Posterior cingulate gyrus (tissue), 11 donors: ENCODE measurements at regions of chr10 and their contacts with region 1.

Region 1: DNA sequence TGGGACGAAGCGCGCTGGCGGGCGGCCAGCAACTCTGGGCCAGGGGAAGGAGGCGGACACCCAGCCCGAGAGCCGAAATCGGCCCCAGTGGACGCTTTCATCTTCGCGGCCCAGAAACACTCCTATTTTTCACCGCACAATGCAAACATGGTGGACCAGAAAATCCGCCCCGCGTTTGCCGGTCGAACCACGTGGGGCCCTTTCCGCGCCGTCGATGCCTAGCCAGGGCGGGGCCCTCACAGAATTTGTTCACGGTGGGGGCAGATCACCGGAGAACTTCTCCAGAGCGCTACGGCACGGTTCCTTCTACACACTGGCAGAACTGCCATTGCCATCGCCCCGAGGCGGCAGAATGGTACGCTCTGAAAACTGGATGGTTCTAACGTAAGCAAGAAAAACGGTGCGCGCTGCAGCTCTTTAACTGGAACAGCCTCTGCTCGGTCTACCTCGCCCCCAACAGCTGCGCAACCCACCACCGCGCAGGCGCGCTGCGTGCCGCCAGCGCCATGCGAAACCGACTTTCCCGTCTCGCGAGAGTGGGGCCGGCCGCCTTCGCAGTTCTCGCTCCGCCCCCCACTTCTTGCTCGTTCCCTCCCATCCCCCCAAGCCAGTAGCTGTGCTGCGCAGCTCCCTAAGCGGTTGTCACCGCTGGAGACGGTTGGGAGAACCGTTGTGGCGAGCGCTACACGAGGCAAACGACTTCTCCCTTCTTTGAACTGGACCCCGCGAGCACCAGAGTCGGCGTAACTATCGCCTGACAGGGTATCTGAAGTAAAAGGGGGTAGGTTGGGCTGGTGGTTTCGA is at the start of gene HNRNPH3:
- DNase-seq: peak; percentile 95 to 99 (median 97)

Region 2: DNA sequence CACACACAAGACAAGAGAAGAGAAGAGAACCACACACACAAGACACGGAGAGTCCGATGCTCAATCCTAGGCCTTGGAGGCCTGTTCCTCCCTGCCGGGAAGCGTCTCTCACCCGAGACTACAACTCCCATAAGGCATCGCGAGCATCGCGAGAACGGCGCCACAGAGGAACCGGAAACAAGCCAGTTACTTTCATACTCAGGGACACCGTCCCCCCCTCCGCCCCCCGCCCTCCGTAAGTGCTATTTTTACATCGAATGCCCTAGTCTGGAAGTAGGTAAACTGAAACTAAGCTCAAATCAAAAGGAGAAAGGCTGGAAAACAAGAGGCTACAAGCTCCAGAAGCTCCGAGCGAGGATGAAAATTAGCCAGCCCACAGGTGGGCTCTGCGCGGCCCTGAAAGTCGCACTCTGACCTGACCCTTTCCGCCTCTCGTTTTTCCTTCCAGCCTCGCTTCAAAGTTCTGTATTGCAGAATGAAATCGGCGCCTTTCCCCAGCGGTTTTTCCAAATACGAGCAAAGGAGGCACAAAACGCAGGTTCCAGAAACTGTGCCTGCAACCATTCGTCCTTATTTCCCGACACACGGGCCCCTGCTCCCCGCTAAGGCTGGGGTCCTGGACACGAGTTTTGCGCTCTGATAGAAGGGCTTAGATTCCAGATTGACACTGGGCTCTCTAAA is 482.2 kb before region 1 on chr10:
- intact Hi-C with region 1: loop called (anchors 10 kb)
- DNase-seq: peak; percentile 92 to 99 (median 97)

Region 3: GRCh38 chr10:67884313-67884841 is 447.3 kb before region 1 on chr10 and contains the start of gene SIRT1:
- intact Hi-C with region 1: loop called (anchors 10 kb)
- DNase-seq: peak; percentile 91 to 99 (median 96)

Region 4: GRCh38 chr10:68074775-68075549 is 256.7 kb before region 1 on chr10 and contains the start of gene HERC4:
- intact Hi-C with region 1: loop called (anchors 2 kb)
- DNase-seq: peak; percentile 86 to 98 (median 90)

Region 5: DNA sequence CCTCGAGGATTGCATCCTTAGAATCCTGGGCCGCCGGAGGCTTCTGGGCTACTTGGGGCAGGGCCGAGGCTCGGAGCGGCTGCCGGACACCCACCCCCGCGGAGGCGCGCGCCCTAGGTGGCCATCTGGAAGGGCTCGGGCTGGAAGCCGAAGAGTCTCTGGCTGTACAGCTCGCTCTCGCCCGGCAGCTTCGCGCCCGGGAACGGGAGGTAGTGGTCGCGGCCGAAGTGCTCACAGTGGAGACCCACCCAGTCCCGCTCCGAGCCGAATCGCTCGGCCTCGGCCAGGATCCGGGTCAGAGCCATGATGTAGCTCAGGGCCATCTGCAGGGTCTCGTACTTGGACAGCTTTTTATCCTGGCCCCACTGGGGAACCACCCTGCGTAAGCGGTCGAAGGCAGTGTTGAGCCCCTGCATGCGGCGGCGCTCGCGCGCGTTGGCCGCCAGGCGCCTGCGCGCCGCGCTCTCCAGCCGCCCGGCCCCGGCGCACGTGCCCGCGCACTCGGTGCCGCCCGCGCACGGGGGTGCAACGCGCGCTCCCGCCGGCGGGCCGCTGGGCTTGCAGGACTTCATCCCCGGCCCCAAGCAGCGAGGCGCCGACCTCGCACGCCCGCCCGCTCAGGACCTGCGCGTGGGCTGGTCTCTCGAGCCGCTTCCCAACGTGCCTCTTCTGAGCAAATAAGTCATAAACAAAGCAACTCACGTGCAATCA is 100.4 kb before region 1 on chr10:
- intact Hi-C with region 1: loop called (anchors 1 kb)
- DNase-seq: peak; percentile 50 to 97 (median 66)

Region 6: GRCh38 chr10:68406815-68407548 is 75.3 kb after region 1 on chr10 and contains the start of gene RUFY2:
- intact Hi-C with region 1: loop called (anchors 5 kb)
- DNase-seq: peak; percentile 62 to 97 (median 78)